H1 (cell line): ENCODE measurements at regions of chr7 and their contacts with region 1.

Region 1: DNA sequence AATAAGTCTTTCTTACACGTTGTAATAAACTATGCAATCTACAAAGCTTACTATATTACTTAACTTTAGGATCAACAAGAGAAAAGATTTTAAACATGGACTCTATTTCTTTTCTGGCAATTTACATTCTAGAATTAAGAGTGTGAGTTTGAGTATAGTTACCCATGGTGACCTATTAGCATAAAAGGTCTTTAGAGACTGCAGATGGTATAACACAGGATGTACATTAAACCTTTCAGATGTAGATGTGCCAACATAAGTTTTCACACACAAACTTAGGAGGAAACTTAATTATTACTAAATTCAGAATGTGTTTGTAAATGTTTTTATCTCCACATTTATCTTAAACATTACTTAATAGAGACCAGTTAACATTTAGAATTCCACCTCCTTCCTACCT is 54.1 kb downstream of the KCND2 start:
- DNase-seq: no peak
- H3K4me3 ChIP-seq: no peak overlapping the region
- H3K27ac ChIP-seq: no peak overlapping the region
- H3K4me1 ChIP-seq: no peaks in the 10 kb centered on the region
- H3K27me3 ChIP-seq: no peaks in the 10 kb centered on the region
- CTCF ChIP-seq: no peak
- EP300 ChIP-seq: no peak
- POLR2A ChIP-seq: no peak
- RAD21 ChIP-seq: no peak

Region 2: GRCh38 chr7:120307991-120308545 is 19.0 kb before region 1 on chr7:
- CTCF ChIA-PET with region 1: no interaction called
- POLR2A ChIA-PET with region 1: no interaction called
- DNase-seq: no peak
- H3K4me3 ChIP-seq: no peak overlapping the region
- H3K27ac ChIP-seq: no peak overlapping the region
- H3K4me1 ChIP-seq: peaks cover 0 to 7% (median 0%) of the 10 kb centered on the region in 4 experiments; a peak in 1 of 7 replicates
- H3K27me3 ChIP-seq: no peaks in the 10 kb centered on the region
- CTCF ChIP-seq: no peak
- EP300 ChIP-seq: no peak
- POLR2A ChIP-seq: no peak
- RAD21 ChIP-seq: no peak

Region 3: GRCh38 chr7:120337308-120337907 is 10.4 kb after region 1 on chr7:
- CTCF ChIA-PET with region 1: interaction called, 11 read pairs
- POLR2A ChIA-PET with region 1: no interaction called
- DNase-seq: no peak
- H3K4me3 ChIP-seq: no peak overlapping the region
- H3K27ac ChIP-seq: no peak overlapping the region
- H3K4me1 ChIP-seq: no peaks in the 10 kb centered on the region
- H3K27me3 ChIP-seq: no peaks in the 10 kb centered on the region
- CTCF ChIP-seq: peak in 2 of 3 experiments; percentile 29 to 65; a peak in 2 of 4 replicates
- EP300 ChIP-seq: no peak
- POLR2A ChIP-seq: no peak
- RAD21 ChIP-seq: peak; percentile 33 to 37